ENCODE measurements at regions of chr9 and their contacts with region 1.

Region 1: GRCh38 chr9:13427587-13427986 is 148.1 kb upstream of the MPDZ start:
- DNase-seq: no peak

Region 2: GRCh38 chr9:14400658-14400995 is 973.0 kb after region 1 on chr9:
- intact Hi-C with region 1: loop called (anchors 5 kb)
- DNase-seq: no peak

Region 3: GRCh38 chr9:14428781-14429230 is 1001.2 kb after region 1 on chr9:
- intact Hi-C with region 1: loop called (anchors 2 kb)
- DNase-seq: no peak

Measured in cardiac septum (tissue), 1 donor.